Activated CD4-positive, alpha-beta T cell treated with anti-CD3 and anti-CD28 coated beads, Interleukin-2, amount 10 ng/mL, durations not matched to agents 24 days and 14 days (primary cell): ENCODE measurements at regions of chr19 and their contacts with region 1.

Region 1: DNA sequence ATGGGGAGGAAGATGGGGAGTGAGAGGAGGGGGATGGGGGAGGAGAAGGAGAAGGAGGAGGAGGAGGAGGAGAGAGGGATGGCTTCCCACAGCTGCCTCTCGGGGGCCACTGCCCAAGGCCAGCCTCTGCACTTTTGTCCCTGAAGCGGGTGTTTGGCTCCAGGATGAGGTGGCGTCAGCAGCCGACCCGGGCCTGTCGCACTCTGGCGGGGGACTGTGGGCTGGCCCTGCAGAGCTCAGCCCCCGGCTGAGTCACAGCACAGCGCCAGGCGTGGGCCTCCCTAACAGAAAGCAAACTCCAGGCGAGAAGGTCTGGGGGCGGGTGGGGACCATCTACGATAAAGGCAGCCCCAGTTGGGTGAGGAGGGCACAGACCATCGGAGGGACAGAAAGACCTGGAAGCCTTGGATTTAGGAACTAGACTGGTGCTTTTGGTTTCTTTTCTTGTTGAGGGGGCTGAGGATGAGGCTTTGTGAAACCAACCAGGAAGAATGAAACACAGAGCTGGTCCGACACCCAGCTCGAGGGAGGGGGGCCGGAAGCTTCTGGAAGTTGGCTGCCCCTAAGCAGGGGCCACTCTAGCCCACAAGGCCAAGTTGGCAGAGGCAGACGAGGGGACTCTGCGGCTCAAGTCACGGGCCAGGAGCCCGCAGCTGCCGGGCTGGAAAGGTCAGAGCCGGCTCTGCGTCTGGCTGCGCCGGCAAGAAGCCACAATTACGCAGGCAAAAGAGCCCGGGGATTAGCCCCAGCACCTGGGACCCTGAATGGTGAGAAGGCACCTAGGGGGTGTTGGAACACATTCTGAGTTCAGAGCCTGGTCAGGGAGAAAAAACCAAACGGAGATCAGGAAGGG is 18.2 kb downstream of the LSM4 start:
- DNase-seq: peak; percentile 94
- H3K4me3 Mint-ChIP-seq: peak overlapping the region; percentile 94
- H3K27ac Mint-ChIP-seq: peak overlapping the region; percentile 98
- H3K4me1 Mint-ChIP-seq: peaks cover 43% of the 10 kb centered on the region
- H3K27me3 Mint-ChIP-seq: no peaks in the 10 kb centered on the region

Region 2: DNA sequence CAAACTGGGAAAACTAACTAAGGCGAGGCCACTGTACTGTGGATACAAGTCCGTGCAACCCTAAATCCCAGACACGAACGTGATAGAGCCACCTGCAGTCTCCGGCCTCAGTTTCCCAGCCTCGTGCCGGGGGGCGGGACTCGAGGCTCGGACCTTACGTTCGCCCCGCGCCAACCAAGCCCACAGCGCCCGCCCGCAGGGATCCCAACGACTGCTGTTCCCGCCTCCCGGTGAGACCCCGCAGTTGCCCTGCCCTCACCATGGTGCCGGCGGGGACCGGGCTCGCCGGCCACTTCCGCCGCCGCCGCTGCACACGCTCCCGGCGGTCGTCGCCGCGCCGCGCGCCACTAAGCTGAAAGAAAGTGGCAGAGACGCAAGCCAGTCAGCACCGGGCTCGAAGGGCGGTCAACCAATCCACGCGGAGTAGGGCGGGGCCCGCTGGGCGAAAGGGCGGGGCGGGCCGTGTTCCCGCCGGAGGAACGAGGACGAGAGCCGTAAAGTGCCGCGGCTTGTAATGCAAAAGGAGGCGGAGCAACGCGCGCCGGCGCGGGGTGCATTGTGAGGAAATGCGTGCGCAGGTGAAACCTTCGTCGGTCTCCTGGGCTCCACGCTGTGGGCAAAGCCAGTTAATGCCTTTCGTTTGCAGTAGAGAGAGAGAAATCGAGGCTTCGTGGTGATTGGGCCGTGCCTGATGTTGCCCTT is 18.2 kb after region 1 on chr19 and contains the start of gene LSM4:
- intact Hi-C with region 1: loop called (anchors 1 kb)
- DNase-seq: peak; percentile 100
- H3K4me3 Mint-ChIP-seq: peak within 1 kb of the TSS; percentile 96
- H3K27ac Mint-ChIP-seq: peak within 1 kb of the TSS; percentile 95
- H3K4me1 Mint-ChIP-seq: peaks cover 48% of the 10 kb centered on the region
- H3K27me3 Mint-ChIP-seq: no peaks in the 10 kb centered on the region
- total RNA-seq, gene LSM4: 217 and 225 TPM in 2 replicates

Region 3: DNA sequence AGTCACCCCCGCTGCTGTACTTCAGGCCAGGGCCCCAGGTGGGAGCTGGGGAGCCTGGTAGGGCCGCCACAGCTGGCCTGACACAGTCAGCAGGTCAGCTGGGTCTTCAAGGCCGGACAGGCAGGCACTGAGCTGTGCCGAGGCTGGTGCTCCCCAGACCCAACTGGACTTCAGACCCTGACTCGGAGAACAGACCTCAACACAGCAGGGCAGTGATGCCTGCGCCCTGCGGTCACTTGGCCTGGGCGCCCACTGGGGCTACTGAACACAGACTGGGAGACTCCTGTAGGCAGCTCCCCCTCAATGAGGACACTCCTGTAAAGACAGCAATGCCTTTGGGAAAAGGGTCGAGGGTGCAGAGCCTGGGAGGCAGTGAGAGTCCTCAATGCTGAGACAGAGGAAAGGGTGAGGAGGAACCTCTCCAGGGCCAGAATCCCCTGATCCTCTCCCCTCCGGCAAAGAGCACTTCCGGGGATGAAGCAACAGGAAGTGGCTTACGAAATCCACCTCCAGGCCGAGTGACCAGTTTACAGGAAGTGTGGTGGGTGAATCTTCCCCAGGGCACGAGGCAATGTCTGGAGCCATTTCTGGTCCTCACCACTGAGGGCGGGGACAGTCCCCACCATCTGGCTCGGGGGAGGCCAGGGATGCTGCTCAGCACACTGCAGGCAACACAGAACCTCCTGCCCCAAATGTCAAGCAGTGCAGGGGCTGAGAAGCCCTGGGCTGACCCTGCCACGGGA is 174.1 kb after region 1 on chr19:
- intact Hi-C with region 1: no loop called
- DNase-seq: peak; percentile 84
- H3K4me3 Mint-ChIP-seq: peak overlapping the region; percentile 82
- H3K27ac Mint-ChIP-seq: peak overlapping the region; percentile 96
- H3K4me1 Mint-ChIP-seq: peaks cover 61% of the 10 kb centered on the region
- H3K27me3 Mint-ChIP-seq: no peaks in the 10 kb centered on the region